Posterior cingulate gyrus (tissue), 11 donors: ENCODE measurements at regions of chr12 and their contacts with region 1.

Region 1: DNA sequence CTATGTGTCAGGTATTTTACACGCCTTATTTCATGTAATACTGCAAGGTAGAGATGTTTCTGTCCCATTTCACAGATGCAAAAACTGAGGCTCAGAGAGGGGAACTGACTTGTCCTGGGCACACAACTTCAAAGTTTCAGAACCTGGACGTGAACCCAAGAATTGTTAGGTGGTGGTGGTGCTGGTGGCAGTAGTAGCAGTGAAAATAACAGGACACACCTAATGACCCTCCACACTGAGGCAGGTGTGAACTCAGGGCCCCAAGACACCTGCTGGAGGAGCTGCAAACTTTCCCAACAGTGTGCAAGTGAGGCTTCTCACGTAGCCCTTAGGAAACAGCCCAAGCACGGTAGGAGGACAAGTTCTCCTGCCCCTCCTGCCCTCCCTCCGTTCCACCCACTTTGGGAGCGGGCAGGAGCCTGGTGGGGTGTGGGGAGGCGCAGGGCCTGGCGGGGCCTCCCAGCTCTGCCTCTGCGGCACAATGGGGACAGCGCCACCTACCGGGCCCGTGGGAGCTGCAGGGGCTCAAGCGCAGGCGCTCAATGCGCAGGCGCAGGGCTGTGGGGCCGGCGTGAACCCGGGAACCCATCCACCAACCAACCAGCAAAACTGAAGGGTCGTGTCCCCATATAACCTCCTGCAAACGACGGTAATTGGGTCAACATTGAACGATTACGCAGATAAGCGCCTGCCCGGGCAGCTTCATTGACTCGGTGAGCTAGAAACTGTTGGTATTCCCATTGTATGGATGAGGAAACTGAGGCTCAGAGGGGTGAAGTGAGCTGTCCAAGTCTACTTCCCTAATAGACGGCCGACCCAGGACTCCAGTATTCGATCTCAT is 12.0 kb upstream of the TRPV4 start:
- DNase-seq: peak; percentile 69 to 97 (median 88)

Region 2: DNA sequence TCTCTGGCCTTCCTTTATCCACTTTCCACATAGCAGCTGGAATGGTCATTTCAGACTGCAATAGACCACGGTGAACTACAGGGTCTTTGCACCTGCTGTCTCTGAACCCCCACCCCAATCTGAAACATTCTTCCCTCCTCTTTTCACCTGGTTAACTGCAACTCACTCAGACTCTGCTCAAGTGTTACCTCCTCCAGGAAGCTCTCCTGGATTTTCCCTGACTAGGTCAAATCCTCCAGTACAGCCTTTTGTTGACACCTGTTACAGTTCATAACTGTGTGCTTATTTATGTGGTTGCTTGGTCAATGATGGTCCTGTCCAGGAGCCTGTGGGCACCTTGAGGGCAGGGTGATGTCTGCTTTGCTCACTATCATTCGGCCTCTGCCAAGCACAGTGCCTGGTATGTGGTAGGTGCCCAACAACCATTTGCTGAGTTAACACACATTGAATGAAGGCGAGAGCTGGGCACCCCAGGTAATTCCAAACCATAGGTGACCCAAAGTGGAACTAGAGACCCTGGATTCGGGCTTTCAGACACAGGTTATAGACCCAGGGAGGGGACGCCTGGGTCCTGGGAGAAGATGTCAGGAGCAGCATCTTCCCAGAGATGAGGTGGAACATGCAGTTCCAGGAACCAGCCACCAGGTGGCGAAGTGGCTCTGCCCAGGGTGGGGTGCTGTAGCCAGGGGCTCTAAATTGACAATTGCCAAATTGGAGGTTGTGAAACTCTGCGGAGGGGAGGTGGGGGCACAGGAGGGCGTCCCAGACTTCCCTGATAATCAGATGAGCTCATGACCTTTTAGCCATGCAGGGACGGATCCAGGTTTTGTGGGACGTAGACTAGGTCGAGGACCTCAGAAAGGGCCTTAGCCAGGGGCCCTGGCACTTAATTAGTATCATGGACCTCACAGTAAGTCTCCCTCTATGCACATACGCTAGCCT is 40.1 kb before region 1 on chr12:
- intact Hi-C with region 1: loop called (anchors 1 kb)
- DNase-seq: peak; percentile 43 to 95 (median 76)

Region 3: GRCh38 chr12:110073049-110073831 is 228.0 kb after region 1 on chr12:
- intact Hi-C with region 1: no loop called
- DNase-seq: peak; percentile 87 to 99 (median 93)